Activated CD4-positive, alpha-beta T cell treated with anti-CD3 and anti-CD28 coated beads for 36 hours (primary cell): ENCODE measurements at regions of chr6 and their contacts with region 1.

Region 1: DNA sequence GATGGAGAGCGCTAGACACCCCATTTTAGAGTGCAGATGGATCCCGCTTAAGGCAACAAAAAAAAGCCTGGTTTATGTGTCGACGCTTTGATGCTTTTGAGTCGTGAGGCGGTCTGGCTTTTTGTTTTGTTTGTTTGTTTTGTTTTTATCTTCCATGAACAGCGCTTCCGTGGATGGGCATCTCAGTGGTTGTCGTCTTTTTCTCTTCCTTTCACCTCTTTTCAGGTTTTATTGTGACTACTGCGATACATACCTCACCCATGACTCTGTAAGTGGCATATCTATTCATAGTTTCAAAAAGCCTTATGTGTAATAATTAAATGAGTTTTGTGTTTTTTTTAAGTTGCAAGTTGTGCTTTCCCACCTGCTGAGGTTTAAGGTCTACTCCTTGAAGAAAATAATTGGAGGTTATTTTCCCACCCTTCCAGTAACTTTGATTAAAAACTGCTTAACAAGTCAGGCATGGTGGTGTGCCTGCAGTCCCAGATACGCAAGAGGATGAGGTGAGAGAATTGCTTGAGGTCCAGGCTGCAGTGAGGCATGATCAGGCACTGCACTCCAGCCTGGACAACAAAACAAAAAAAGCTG is 476 bp downstream of the SNRPC start:
- DNase-seq: no peak
- ATAC-seq: no peak
- H3K4me3 Mint-ChIP-seq: no peak overlapping the region
- H3K27ac Mint-ChIP-seq: no peak overlapping the region
- H3K4me1 Mint-ChIP-seq: peaks cover 12% of the 10 kb centered on the region
- H3K27me3 Mint-ChIP-seq: no peaks in the 10 kb centered on the region

Region 2: DNA sequence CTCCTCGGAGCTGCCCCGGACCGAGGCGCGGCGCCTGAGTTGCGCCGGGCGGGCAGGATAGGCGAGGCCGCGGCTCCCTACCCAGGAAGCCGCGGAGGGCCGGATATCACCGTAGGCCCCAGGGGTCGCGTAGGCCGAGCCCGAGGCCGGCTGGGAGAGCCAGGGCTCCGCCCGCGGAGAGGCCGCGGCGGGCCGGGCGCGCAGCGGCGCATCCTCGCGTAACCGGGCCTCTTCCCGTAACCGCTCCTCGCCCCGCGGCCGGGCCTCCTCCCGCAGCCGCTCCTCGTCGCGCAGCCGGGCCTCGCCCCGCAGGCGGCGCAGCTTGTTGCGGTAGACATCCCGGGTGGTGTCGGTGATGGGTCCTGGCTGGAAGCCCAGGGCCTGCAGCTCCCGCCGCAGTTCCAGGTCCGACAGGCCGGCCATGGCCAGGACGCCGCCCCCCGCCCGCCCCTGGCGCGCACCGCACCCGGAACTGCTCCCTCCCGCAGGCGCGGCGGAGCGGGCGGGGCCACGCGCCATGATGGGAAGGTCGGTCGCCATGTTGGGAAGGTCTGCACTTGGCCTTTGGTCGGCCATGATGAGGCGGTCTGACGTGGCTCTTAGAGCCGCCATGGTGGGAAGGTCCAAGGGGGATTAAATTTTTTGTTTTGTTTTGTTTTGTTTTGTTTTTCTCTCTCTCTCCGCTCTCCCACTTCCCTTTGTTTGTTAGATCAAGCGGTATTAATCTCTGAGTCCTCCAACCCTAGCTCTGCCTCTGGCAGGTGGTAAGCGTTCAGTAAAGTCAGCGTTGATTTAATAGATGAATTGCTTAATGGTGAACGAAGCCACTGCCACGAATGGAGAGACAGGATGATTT is 968.9 kb before region 1 on chr6 and contains the start of gene LEMD2:
- CTCF ChIA-PET with region 1: no interaction called
- POLR2A ChIA-PET with region 1: no interaction called
- intact Hi-C with region 1: loop called in 1 of 2 experiments (anchors 1 kb)
- DNase-seq: peak; percentile 93
- ATAC-seq: peak; percentile 87
- H3K4me3 Mint-ChIP-seq: peak within 1 kb of the TSS; percentile 96
- H3K27ac Mint-ChIP-seq: peak within 1 kb of the TSS; percentile 99
- H3K4me1 Mint-ChIP-seq: peaks cover 47% of the 10 kb centered on the region
- H3K27me3 Mint-ChIP-seq: no peaks in the 10 kb centered on the region
- total RNA-seq, gene LEMD2: 55.2 to 61.5 TPM

Region 3: DNA sequence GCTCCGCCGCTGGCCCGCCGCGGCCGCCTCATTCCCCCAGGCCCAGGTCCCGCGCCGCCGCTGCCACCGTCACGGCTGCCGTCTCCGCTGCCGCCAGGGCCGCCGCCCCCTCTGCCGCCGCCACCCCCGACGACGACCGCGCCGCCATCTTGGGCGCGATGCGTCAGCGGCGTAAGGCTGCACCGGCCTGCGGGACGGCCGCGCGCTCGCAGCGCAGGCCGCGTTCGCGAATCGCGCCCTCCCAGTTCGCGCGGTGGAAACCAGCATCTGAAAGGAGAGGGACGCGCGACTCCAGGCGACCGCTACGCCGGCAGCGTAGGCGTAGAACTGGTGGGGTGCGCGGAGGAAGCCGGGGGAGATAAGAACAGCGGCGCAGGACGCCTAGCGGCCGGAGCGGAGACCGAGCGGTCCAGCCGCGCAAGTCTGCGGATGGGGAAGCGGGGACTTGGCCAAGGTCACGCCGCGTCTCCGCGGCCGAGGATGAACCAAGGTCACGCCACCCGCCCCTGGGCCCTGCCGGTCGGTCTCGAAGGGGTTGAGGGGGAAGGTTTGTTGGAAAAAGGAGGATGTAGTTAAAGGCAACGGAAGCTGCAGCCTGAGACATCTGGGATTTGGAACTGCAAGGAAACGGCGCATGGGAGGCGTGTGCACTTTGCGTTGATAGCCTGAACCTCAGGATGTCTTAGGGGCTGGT is 365.1 kb before region 1 on chr6 and contains the start of gene NUDT3:
- CTCF ChIA-PET with region 1: no interaction called
- POLR2A ChIA-PET with region 1: interaction called, 5 read pairs
- intact Hi-C with region 1: loop called in 1 of 2 experiments (anchors 1 kb)
- DNase-seq: peak; percentile 96
- ATAC-seq: peak; percentile 92
- H3K4me3 Mint-ChIP-seq: no peak within 1 kb of the TSS
- H3K27ac Mint-ChIP-seq: peak within 1 kb of the TSS; percentile 95
- H3K4me1 Mint-ChIP-seq: peaks cover 21% of the 10 kb centered on the region
- H3K27me3 Mint-ChIP-seq: no peaks in the 10 kb centered on the region
- total RNA-seq, gene NUDT3: 13.3 to 13.6 TPM

Region 4: DNA sequence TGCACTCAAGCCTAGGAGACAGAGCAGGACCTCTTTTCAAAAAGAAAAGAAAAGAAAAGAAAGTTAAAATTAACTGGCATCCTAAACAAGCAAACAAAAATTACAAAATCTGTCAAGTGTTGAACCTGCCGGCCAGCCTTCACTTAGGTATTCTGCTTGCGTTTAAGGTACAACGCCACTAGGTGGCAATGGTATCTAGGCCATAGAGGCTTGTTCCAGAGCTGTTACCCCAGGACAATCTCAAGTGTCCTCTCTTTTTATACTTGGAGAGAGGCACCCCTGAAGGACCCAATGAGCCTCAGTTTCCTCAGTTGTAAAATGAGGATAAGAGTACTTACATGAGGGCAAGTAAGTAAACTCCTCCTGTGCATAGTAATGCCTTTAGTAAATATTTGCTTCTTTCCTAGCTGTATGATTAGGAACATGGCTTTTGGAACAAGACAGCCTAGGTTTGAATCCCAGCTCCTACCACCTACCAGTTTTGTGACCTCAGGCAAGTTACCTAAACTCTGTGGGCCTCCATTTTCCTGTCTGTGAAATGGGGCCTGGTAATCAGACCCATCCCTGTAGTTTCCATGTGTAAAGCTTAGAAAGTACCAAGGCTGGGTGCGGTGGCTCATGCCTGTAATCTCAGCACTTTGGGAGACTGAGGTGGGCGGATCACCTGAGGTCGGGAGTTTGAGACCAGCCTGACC is 297.7 kb before region 1 on chr6:
- CTCF ChIA-PET with region 1: interaction called, 3 read pairs
- POLR2A ChIA-PET with region 1: no interaction called
- intact Hi-C with region 1: loop called in 1 of 2 experiments (anchors 1 kb)
- DNase-seq: peak; percentile 73
- ATAC-seq: peak; percentile 84
- H3K4me3 Mint-ChIP-seq: no peak overlapping the region
- H3K27ac Mint-ChIP-seq: no peak overlapping the region
- H3K4me1 Mint-ChIP-seq: no peaks in the 10 kb centered on the region
- H3K27me3 Mint-ChIP-seq: peaks cover 3% of the 10 kb centered on the region

Region 5: DNA sequence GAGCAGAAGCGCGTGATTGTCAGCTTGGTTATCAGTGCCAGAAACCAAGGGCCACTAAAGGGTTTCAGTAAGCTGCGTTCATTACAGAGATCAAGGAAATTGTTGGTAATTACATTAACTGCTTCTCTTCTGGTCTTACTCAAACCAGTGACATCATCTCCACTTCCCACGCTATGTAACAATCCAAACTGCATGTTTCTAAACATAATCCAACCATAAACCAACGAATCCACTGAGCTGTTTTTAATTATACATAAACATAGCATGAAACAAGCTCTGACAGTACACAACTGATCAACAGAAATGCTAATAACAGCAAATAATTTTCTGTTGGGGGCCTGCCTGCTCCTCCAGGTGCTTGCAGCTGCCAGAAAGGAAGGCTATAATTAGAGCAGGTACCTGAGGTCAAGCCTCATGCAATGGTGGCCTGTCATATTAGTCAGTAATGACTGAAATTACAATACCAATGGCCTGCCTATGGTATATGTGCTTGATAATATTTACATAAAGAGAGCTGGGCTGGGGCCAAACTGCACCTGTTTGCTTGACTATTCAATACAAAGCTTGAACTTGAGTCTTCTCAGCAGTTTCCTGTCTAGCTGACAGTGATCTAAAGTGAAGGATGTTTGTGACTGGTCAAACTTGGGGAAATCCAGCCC is 101.3 kb before region 1 on chr6:
- CTCF ChIA-PET with region 1: interaction called, 4 read pairs
- POLR2A ChIA-PET with region 1: interaction called, 3 read pairs
- intact Hi-C with region 1: loop called (anchors 1 kb)
- DNase-seq: peak; percentile 74
- ATAC-seq: peak; percentile 94
- H3K4me3 Mint-ChIP-seq: peak overlapping the region; percentile 58
- H3K27ac Mint-ChIP-seq: peak overlapping the region; percentile 90
- H3K4me1 Mint-ChIP-seq: peaks cover 55% of the 10 kb centered on the region
- H3K27me3 Mint-ChIP-seq: no peaks in the 10 kb centered on the region

Region 6: DNA sequence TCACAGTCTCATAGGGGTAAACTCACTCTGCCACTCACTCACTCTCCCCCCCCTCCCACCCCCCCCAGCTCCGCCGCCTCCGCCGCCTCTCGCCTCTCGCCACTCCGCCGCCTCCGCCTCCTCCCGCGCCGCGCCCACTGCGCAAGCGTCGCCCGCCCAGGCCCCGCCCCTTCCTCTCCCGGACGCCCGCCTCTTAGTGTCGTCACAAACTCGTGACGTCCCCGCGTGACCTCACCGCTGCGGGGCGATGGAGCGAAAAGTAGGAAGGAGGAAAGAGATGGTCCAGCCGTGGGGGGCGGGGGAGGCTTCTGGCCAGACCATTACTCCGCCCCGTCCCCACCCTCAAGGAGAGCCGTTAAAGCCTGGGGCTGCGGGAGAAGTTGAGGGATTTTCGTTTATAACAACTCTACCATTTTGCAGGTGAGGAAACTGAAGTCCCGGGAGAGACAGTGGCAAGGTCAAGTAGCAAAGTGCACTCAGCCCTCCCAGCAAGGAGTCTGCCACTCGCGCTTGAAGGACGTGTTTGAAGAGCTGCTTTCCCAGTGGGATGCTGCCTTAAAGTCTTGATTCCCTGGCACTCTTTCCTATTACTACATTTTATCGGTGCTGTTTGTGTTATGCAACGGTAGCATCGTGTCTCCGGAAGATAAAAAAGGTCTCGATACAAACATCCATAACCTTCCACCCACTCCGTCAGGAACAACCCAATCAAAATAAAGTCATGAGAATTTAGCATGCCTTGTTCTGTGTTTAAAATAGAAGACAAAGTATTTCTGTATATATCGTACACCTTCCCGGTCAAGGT is 60.8 kb before region 1 on chr6 and contains the start of gene ILRUN:
- CTCF ChIA-PET with region 1: no interaction called
- POLR2A ChIA-PET with region 1: interaction called, 10 read pairs
- intact Hi-C with region 1: loop called (anchors 1 to 5 kb)
- DNase-seq: peak; percentile 98
- ATAC-seq: peak; percentile 84
- H3K4me3 Mint-ChIP-seq: peak within 1 kb of the TSS; percentile 92
- H3K27ac Mint-ChIP-seq: peak within 1 kb of the TSS; percentile 99
- H3K4me1 Mint-ChIP-seq: peaks cover 45% of the 10 kb centered on the region
- H3K27me3 Mint-ChIP-seq: no peaks in the 10 kb centered on the region
- total RNA-seq, gene ILRUN: 56.2 to 66.9 TPM

Region 7: GRCh38 chr6:35139908-35140655 is 382.3 kb after region 1 on chr6:
- CTCF ChIA-PET with region 1: no interaction called
- POLR2A ChIA-PET with region 1: no interaction called
- intact Hi-C with region 1: loop called in 1 of 2 experiments (anchors 2 kb)
- DNase-seq: peak; percentile 70
- ATAC-seq: peak; percentile 39
- H3K4me3 Mint-ChIP-seq: no peak overlapping the region
- H3K27ac Mint-ChIP-seq: no peak overlapping the region
- H3K4me1 Mint-ChIP-seq: peaks cover 13% of the 10 kb centered on the region
- H3K27me3 Mint-ChIP-seq: peaks cover 18% of the 10 kb centered on the region